BJ (cell line): ENCODE measurements at regions of chr2 and their contacts with region 1.

Region 1: GRCh38 chr2:219142329-219142728 is 18.3 kb downstream of the NHEJ1 start:
- DNase-seq: peak; percentile 76
- H3K4me3 ChIP-seq: no peak overlapping the region
- H3K27me3 ChIP-seq: no peaks in the 10 kb centered on the region
- CTCF ChIP-seq: peak; percentile 59

Region 2: GRCh38 chr2:219131327-219131726 is 11.0 kb before region 1 on chr2:
- CTCF ChIA-PET with region 1: interaction called, 12 read pairs
- POLR2A ChIA-PET with region 1: no interaction called
- DNase-seq: no peak
- H3K4me3 ChIP-seq: no peak overlapping the region
- H3K27me3 ChIP-seq: no peaks in the 10 kb centered on the region
- CTCF ChIP-seq: no peak

Region 3: DNA sequence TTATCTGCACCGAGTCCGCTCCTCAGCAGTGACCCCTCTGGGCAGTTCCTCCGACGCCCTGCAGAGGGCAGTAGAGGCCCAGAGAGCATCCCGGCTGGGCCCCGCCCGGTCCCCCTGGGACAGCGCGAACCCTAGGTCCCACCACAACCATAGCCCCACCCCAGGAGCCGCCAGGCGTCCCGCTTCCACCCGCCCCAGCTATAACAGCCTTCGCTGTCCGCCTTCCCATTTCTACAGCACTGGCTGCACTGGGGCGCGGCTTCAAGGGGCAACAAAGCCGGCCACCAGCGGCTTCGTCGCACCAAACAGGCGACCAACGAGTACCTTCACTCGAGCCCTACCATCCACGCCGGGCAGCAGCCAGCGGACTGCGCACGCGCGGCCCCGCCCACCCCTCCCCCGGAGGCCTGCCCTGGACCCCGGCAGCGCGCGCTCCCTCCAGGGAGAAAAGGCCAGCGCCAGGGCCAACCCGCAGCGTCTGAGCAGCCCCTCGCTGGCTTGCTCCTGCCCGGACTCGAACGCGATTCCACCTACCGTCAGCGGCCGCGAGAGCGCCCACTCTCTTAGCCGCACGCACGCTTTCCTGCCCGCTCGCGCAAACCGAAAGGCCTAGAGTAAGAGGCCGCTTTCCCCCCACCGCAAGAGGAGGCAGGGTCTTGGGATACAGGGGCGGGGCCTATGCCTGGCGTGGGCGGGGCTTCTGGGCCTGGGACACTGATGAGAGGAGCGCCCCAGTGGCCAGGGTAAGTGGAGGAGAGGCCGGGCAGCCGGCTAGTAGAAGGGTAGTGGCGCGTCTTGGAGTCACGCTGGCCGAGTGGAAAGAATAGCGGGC is 18.1 kb after region 1 on chr2 and contains the start of gene NHEJ1:
- CTCF ChIA-PET with region 1: interaction called, 92 read pairs
- POLR2A ChIA-PET with region 1: no interaction called
- DNase-seq: peak; percentile 63
- H3K4me3 ChIP-seq: peak within 1 kb of the TSS; percentile 73
- H3K27me3 ChIP-seq: no peaks in the 10 kb centered on the region
- CTCF ChIP-seq: peak; percentile 99
- polyA plus RNA-seq, gene NHEJ1: 23.9 and 24.1 TPM in 2 replicates